Activated CD8-positive, alpha-beta T cell treated with anti-CD3 and anti-CD28 coated beads for 36 hours (primary cell): ENCODE measurements at regions of chr11 and their contacts with region 1.

Region 1: GRCh38 chr11:43895601-43896000 is 15.0 kb downstream of the ALKBH3 start:
- DNase-seq: no peak
- ATAC-seq: no peak
- H3K4me3 Mint-ChIP-seq: no peak overlapping the region
- H3K27ac Mint-ChIP-seq: no peak overlapping the region
- H3K4me1 Mint-ChIP-seq: no peaks in the 10 kb centered on the region
- H3K27me3 Mint-ChIP-seq: no peaks in the 10 kb centered on the region
- CTCF ChIP-seq: no peak

Region 2: DNA sequence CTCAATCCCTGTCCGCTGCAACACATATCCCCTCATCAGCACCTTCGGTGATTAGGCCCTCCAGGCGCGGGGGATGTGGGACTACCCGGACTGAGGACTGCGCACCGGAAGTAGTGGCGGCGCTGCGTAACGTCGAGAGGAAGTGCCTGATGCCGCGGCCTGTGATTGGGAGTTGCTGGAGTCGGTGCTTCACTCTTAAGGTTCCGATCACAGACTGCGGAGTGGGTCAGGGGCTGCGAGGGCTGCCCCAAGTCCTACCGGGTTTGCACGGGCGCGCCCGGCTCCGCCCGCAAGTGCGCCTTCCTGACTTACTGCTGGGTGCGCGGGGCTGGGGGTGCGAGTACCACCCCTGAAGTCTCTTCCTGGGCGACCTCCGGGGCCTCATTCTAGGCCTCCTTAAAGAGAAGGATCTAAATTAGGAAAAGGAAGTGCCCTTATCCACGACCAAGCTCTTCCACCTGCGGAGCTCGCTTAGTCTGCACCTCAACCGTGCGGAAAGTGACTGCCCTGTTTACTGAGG is 14.9 kb before region 1 on chr11 and contains the start of gene ALKBH3:
- CTCF ChIA-PET with region 1: interaction called, 22 read pairs
- POLR2A ChIA-PET with region 1: no interaction called
- intact Hi-C with region 1: no loop called
- DNase-seq: peak; percentile 95
- ATAC-seq: peak; percentile 100
- H3K4me3 Mint-ChIP-seq: peak within 1 kb of the TSS; percentile 81
- H3K27ac Mint-ChIP-seq: peak within 1 kb of the TSS; percentile 85
- H3K4me1 Mint-ChIP-seq: peaks cover 32% of the 10 kb centered on the region
- H3K27me3 Mint-ChIP-seq: peaks cover 2% of the 10 kb centered on the region
- CTCF ChIP-seq: no peak
- total RNA-seq, gene ALKBH3: 40.1 to 48.4 TPM

Region 3: DNA sequence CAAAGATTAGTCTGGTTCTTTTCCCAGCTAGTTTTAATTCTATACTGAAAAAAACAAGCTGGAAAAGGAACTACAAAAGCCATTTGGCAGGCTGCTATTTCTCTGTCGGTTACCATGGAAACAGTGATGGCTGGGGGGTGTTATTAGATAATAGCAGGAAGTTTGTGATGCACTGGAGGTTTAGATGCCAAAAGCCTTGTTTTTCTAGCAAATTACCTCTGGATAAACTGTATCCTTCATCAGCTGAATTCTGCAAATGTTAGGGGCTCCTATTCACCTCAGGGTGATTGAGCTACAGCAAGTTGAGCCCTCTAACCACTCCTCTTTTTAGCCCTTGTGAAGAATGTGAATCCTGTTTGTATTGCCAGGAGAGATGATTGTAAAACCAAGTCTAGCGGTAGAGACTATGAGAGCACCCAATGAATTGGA is 10.2 kb after region 1 on chr11:
- CTCF ChIA-PET with region 1: interaction called, 17 read pairs
- POLR2A ChIA-PET with region 1: no interaction called
- intact Hi-C with region 1: no loop called
- DNase-seq: no peak
- ATAC-seq: no peak
- H3K4me3 Mint-ChIP-seq: no peak overlapping the region
- H3K27ac Mint-ChIP-seq: no peak overlapping the region
- H3K4me1 Mint-ChIP-seq: peaks cover 18% of the 10 kb centered on the region
- H3K27me3 Mint-ChIP-seq: no peaks in the 10 kb centered on the region
- CTCF ChIP-seq: no peak

Region 4: DNA sequence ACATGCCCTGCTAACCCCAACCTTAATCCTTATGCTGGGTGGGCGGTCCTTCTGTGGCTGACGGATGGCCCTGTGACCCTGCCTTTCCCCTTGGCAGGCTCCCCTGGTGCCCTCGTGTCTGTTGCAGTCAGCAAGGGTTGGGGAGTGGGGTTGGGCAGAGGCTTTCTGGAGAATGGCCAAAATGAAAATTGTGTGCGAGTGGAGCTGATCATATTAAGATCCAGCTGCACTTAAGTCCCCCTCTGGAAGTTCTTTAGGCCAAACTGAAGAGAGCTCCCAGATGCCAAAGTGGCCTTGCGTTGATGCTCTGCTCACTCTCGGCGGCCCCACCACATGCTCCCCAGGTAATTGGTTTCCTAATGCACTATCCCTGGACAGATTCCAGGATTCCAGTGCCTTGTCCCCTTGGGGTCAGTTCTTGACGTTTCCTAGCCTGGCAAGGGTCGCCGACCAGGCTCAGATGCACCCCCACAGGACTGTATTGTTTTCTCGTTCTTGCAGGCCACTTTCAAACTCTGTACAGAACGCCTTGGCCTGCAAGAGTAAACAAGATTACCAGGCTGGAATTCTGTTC is 30.4 kb after region 1 on chr11:
- CTCF ChIA-PET with region 1: no interaction called
- POLR2A ChIA-PET with region 1: no interaction called
- intact Hi-C with region 1: no loop called
- DNase-seq: no peak
- ATAC-seq: no peak
- H3K4me3 Mint-ChIP-seq: no peak overlapping the region
- H3K27ac Mint-ChIP-seq: no peak overlapping the region
- H3K4me1 Mint-ChIP-seq: peaks cover 12% of the 10 kb centered on the region
- H3K27me3 Mint-ChIP-seq: no peaks in the 10 kb centered on the region
- CTCF ChIP-seq: no peak

Region 5: GRCh38 chr11:43944761-43945311 is 49.2 kb after region 1 on chr11:
- CTCF ChIA-PET with region 1: interaction called, 108 read pairs
- POLR2A ChIA-PET with region 1: no interaction called
- intact Hi-C with region 1: loop called (anchors 1 kb)
- DNase-seq: peak; percentile 84
- ATAC-seq: peak; percentile 44
- H3K4me3 Mint-ChIP-seq: peak overlapping the region; percentile 79
- H3K27ac Mint-ChIP-seq: no peak overlapping the region
- H3K4me1 Mint-ChIP-seq: peaks cover 11% of the 10 kb centered on the region
- H3K27me3 Mint-ChIP-seq: peaks cover 51% of the 10 kb centered on the region
- CTCF ChIP-seq: peak; percentile 86

Region 6: GRCh38 chr11:44024977-44025376 is 129.4 kb after region 1 on chr11:
- CTCF ChIA-PET with region 1: no interaction called
- POLR2A ChIA-PET with region 1: no interaction called
- intact Hi-C with region 1: no loop called
- DNase-seq: no peak
- ATAC-seq: no peak
- H3K4me3 Mint-ChIP-seq: no peak overlapping the region
- H3K27ac Mint-ChIP-seq: no peak overlapping the region
- H3K4me1 Mint-ChIP-seq: no peaks in the 10 kb centered on the region
- H3K27me3 Mint-ChIP-seq: peaks cover 26% of the 10 kb centered on the region
- CTCF ChIP-seq: no peak

Region 7: DNA sequence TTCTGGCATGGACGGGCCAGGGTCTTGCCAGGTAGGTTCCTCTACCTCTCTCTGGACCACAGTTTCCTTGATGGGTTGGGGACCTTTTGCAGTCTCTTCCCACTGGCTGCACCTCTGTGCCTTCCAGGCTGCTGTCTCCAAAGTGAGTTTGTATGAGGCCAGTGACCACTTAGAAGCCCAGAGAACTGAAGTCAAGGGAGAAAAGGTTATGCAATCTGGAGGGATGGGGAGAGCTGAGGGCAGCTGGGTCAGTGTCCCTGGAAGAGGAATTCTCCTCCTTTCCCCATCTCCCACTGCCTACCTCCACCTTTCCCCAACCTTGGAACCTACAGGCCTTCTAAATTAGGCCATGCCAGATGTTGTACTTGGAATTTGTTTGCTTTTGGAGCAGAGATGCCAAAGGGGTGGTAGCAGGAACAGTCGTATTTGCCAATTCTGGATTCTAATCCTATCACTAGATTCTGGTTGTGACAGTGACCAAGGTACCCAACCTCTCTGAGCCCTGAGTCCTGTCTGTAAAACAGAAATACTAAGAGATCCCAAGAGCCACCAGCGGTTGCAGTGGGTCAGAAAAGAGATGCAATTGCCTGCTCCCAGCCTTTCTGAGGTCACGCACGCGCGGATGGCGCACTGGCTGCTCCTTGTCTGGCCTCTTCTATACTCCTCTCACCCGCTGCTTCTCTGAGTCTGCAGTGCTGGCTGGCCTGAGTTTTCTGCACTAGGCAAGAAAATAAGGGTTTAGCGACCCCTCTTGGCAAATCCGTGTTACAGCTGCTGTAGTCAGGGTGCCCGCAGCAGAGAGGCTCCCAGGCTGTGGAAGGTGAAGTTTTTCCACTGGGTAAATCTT is 141.4 kb after region 1 on chr11:
- CTCF ChIA-PET with region 1: no interaction called
- POLR2A ChIA-PET with region 1: no interaction called
- intact Hi-C with region 1: loop called (anchors 2 kb)
- DNase-seq: peak; percentile 60
- ATAC-seq: peak; percentile 90
- H3K4me3 Mint-ChIP-seq: no peak overlapping the region
- H3K27ac Mint-ChIP-seq: no peak overlapping the region
- H3K4me1 Mint-ChIP-seq: no peaks in the 10 kb centered on the region
- H3K27me3 Mint-ChIP-seq: peaks cover 7% of the 10 kb centered on the region
- CTCF ChIP-seq: peak; percentile 51